B cell (primary cell): ENCODE measurements at regions of chr14 and their contacts with region 1.

Region 1: DNA sequence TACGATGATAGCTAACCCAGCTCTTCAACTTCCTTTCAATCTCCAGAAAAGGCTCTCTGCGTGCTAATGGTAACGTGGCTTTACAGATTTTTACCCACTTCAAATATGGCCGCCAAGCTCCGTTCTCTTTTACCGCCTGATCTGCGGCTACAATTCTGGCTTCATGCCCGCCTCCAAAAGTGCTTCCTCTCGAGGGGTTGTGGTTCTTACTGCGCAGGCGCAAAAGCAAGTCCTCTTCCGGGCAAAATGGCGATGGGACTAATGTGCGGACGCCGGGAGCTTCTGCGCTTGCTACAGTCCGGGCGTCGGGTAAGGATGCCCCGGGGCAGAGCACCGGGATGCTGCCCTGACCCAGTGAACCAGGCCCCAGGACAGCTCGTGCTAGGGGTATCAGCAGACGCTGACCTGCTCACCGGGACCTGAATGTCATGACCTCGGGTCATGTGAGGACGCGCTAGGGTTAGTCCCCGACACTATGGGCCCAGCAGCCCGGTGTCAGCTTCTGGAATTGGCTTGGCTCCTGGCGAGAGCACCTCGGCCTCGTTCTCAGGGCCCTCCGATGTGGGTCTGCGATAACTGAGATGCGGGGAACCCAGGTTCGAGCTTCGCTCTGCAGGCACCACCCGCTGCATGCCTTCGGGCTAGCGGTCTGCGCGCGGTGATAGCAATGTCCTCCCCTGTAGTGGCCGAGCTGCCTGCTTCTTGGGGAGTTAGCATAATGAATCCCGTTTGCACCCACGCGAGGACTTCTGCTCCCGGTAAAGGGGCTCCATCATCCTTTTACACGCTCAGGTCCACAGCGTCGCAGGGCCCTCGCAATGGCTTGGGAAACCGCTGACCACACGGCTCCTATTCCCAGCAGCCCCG is at the start of gene OXA1L:
- DNase-seq: peak; percentile 98
- ATAC-seq: peak; percentile 93
- H3K4me3 ChIP-seq: peak within 1 kb of the TSS; percentile 83 to 95 (median 92)
- H3K4me3 Mint-ChIP-seq: peak within 1 kb of the TSS; percentile 84
- H3K27ac ChIP-seq: peak within 1 kb of the TSS; percentile 84 to 89
- H3K27ac Mint-ChIP-seq: peak within 1 kb of the TSS; percentile 93
- H3K4me1 ChIP-seq: peaks cover 18 to 23% of the 10 kb centered on the region in 2 donors
- H3K4me1 Mint-ChIP-seq: peaks cover 34% of the 10 kb centered on the region
- H3K27me3 ChIP-seq: no peaks in the 10 kb centered on the region
- H3K27me3 Mint-ChIP-seq: no peaks in the 10 kb centered on the region
- CTCF ChIP-seq: no peak
- total RNA-seq, gene OXA1L: 186 and 201 TPM in 2 replicates

Region 2: GRCh38 chr14:22589096-22589839 is 177.4 kb before region 1 on chr14 and contains the start of gene DAD1:
- CTCF ChIA-PET with region 1: no interaction called
- POLR2A ChIA-PET with region 1: interaction called, 8 read pairs
- intact Hi-C with region 1: loop called (anchors 1 kb)
- DNase-seq: peak; percentile 100
- ATAC-seq: peak; percentile 89
- H3K4me3 ChIP-seq: peak within 1 kb of the TSS; percentile 75 to 84 (median 78)
- H3K4me3 Mint-ChIP-seq: peak within 1 kb of the TSS; percentile 99
- H3K27ac ChIP-seq: peak within 1 kb of the TSS; percentile 97
- H3K27ac Mint-ChIP-seq: peak within 1 kb of the TSS; percentile 96
- H3K4me1 ChIP-seq: peaks cover 30% of the 10 kb centered on the region in 2 donors
- H3K4me1 Mint-ChIP-seq: peaks cover 53% of the 10 kb centered on the region
- H3K27me3 ChIP-seq: no peaks in the 10 kb centered on the region
- H3K27me3 Mint-ChIP-seq: peaks cover 2% of the 10 kb centered on the region
- CTCF ChIP-seq: no peak
- total RNA-seq, gene DAD1: 76.1 and 77.4 TPM in 2 replicates

Region 3: GRCh38 chr14:22713631-22713950 is 53.1 kb before region 1 on chr14:
- CTCF ChIA-PET with region 1: interaction called, 5 read pairs
- POLR2A ChIA-PET with region 1: no interaction called
- intact Hi-C with region 1: loop called (anchors 2 kb)
- DNase-seq: no peak
- ATAC-seq: no peak
- H3K4me3 ChIP-seq: peak overlapping the region in 4 of 5 experiments; percentile 23 to 53 (median 45)
- H3K4me3 Mint-ChIP-seq: peak overlapping the region; percentile 90
- H3K27ac ChIP-seq: no peak overlapping the region
- H3K27ac Mint-ChIP-seq: no peak overlapping the region
- H3K4me1 ChIP-seq: peaks cover 5 to 6% of the 10 kb centered on the region in 2 donors
- H3K4me1 Mint-ChIP-seq: peaks cover 11% of the 10 kb centered on the region
- H3K27me3 ChIP-seq: peaks cover 0 to 21% (median 14%) of the 10 kb centered on the region in 4 experiments
- H3K27me3 Mint-ChIP-seq: peaks cover 33% of the 10 kb centered on the region
- CTCF ChIP-seq: no peak

Region 4: DNA sequence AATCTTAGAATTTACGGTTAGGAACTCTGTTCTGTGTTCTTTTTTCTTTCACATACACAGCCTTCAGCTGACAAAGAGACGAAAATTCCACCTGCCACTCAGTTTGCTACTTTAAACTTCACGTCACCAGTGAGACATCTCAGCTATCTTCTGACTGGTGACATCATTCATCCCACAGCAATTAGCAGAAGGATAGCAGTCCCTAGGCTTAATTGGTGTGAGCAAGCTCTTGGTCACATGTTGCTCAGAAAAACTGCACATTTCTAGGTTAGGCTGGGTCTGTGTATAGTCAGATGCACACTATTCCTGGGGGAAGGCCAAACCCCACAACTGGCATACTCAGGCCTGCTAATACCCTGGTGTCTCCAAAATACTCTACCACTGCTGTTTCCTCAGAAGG is 24.6 kb after region 1 on chr14:
- CTCF ChIA-PET with region 1: interaction called, 16 read pairs
- POLR2A ChIA-PET with region 1: interaction called, 5 read pairs
- intact Hi-C with region 1: loop called (anchors 2 kb)
- DNase-seq: peak; percentile 31
- ATAC-seq: no peak
- H3K4me3 ChIP-seq: no peak overlapping the region
- H3K4me3 Mint-ChIP-seq: peak overlapping the region; percentile 43
- H3K27ac ChIP-seq: peak overlapping the region; percentile 75 to 84
- H3K27ac Mint-ChIP-seq: peak overlapping the region; percentile 78
- H3K4me1 ChIP-seq: peaks cover 43 to 51% of the 10 kb centered on the region in 2 donors
- H3K4me1 Mint-ChIP-seq: peaks cover 59% of the 10 kb centered on the region
- H3K27me3 ChIP-seq: no peaks in the 10 kb centered on the region
- H3K27me3 Mint-ChIP-seq: no peaks in the 10 kb centered on the region
- CTCF ChIP-seq: no peak

Region 5: GRCh38 chr14:22829661-22830442 is 63.2 kb after region 1 on chr14 and contains the start of gene MRPL52:
- CTCF ChIA-PET with region 1: interaction called, 31 read pairs
- POLR2A ChIA-PET with region 1: interaction called, 3 read pairs
- intact Hi-C with region 1: loop called (anchors 1 kb)
- DNase-seq: peak; percentile 95
- ATAC-seq: peak; percentile 94
- H3K4me3 ChIP-seq: peak within 1 kb of the TSS; percentile 68 to 92 (median 84)
- H3K4me3 Mint-ChIP-seq: peak within 1 kb of the TSS; percentile 84
- H3K27ac ChIP-seq: peak within 1 kb of the TSS; percentile 87 to 91
- H3K27ac Mint-ChIP-seq: peak within 1 kb of the TSS; percentile 93
- H3K4me1 ChIP-seq: peaks cover 18 to 22% of the 10 kb centered on the region in 2 donors
- H3K4me1 Mint-ChIP-seq: peaks cover 30% of the 10 kb centered on the region
- H3K27me3 ChIP-seq: no peaks in the 10 kb centered on the region
- H3K27me3 Mint-ChIP-seq: no peaks in the 10 kb centered on the region
- CTCF ChIP-seq: no peak
- total RNA-seq, gene MRPL52: 91.6 and 93.0 TPM in 2 replicates

Region 6: GRCh38 chr14:22929104-22929847 is 162.6 kb after region 1 on chr14 and contains the start of gene PRMT5:
- CTCF ChIA-PET with region 1: no interaction called
- POLR2A ChIA-PET with region 1: no interaction called
- intact Hi-C with region 1: loop called (anchors 1 kb)
- DNase-seq: peak; percentile 100
- ATAC-seq: peak; percentile 94
- H3K4me3 ChIP-seq: peak within 1 kb of the TSS; percentile 64 to 100 (median 96)
- H3K4me3 Mint-ChIP-seq: no peak within 1 kb of the TSS
- H3K27ac ChIP-seq: peak within 1 kb of the TSS; percentile 65 to 86
- H3K27ac Mint-ChIP-seq: no peak within 1 kb of the TSS
- H3K4me1 ChIP-seq: peaks cover 13 to 23% of the 10 kb centered on the region in 2 donors
- H3K4me1 Mint-ChIP-seq: peaks cover 26% of the 10 kb centered on the region
- H3K27me3 ChIP-seq: no peaks in the 10 kb centered on the region
- H3K27me3 Mint-ChIP-seq: no peaks in the 10 kb centered on the region
- CTCF ChIP-seq: no peak
- total RNA-seq, gene PRMT5: 38.8 and 48.6 TPM in 2 replicates